Common myeloid progenitor, CD34-positive (primary cell): ENCODE measurements at regions of chr2 and their contacts with region 1.

Region 1: GRCh38 chr2:85888684-85889626 is at the start of gene ST3GAL5:
- DNase-seq: peak; percentile 87 to 95 (median 94)
- H3K4me3 ChIP-seq: peak within 1 kb of the TSS; percentile 53 to 88 (median 84)
- H3K27ac ChIP-seq: peak within 1 kb of the TSS in 1 of 2 experiments; percentile 79
- H3K4me1 ChIP-seq: peaks cover 23 to 71% (median 60%) of the 10 kb centered on the region in 4 experiments
- H3K27me3 ChIP-seq: peaks cover 0 to 1% (median 0%) of the 10 kb centered on the region in 5 experiments

Region 2: DNA sequence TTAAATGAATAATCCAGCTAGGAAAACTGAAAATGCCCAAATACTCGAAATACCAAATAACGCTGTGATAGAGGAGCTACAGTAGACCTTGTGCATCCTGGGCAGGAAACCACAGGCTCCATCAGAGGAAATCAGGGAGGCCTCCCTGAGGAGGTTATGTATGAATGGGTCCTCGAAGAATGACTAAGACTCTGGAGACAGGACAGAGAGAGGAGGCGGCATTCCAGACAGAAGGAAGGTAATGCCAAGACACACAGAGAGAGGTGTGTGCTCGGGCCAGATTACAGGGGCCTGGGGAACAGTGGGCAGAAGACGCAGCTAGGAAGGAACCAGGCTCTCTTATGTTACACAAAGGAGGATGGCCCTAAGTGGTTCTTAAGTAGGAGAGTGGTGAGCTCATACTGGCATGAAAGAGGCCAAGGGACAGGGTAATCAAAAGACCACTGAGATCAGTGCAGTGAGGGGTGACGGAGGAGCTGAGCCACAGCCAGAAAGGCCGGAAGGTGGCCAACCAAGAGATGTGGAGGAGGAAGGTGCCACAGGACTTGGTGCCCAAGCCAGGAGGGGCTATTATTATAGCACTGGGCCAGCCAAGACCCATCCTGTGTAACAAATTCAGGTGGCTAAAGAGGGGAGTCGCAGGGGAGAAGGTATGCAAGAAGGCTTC is 10.1 kb before region 1 on chr2:
- CTCF ChIA-PET with region 1: interaction called, 20 read pairs
- POLR2A ChIA-PET with region 1: interaction called, 5 read pairs
- DNase-seq: peak in 2 of 3 donors; percentile 51 to 58
- H3K4me3 ChIP-seq: peak overlapping the region in 1 of 7 experiments; percentile 7
- H3K27ac ChIP-seq: no peak overlapping the region
- H3K4me1 ChIP-seq: peaks cover 5 to 36% (median 27%) of the 10 kb centered on the region in 4 experiments
- H3K27me3 ChIP-seq: no peaks in the 10 kb centered on the region

Region 3: DNA sequence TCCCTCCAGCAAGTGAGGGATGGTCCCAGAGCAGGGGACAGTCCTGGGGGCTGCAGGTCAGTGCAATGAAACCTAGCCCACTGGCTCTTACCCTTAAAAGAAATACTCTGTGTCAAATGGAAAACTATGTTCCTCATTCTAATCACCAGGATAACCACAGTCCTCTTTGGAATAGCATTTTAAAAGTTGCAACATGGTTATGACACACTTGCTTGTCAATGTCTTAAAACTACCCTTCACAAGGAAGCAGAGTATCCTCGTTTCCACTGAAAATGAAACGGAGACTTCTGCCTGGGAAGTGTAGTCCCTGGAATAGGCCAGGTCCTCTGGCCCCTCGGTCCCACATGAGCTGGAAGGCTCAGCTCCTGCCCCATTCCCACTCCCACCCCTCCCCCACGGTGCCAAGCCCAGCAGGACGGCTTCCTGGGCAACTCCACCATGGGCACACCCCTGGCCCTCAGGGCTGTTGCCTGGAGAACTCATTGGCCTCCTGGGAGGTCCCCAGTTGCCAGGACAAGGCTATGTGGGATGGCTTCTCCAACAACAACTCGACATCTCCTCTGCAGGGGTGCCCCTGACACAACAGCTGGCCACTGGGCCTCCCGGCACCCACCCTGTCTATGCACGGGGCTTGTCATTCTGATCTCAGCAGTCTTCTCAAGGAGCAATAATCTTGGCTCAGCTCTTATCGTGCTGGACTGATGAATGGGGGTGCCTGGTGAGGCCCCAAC is 38.1 kb after region 1 on chr2:
- CTCF ChIA-PET with region 1: interaction called, 25 read pairs
- POLR2A ChIA-PET with region 1: interaction called, 3 read pairs
- DNase-seq: no peak
- H3K4me3 ChIP-seq: no peak overlapping the region
- H3K27ac ChIP-seq: no peak overlapping the region
- H3K4me1 ChIP-seq: peaks cover 0 to 4% (median 0%) of the 10 kb centered on the region in 4 experiments
- H3K27me3 ChIP-seq: no peaks in the 10 kb centered on the region

Region 4: GRCh38 chr2:86020984-86021383 is 132.0 kb after region 1 on chr2:
- CTCF ChIA-PET with region 1: interaction called, 10 read pairs
- POLR2A ChIA-PET with region 1: interaction called, 3 read pairs
- DNase-seq: no peak
- H3K4me3 ChIP-seq: no peak overlapping the region
- H3K27ac ChIP-seq: no peak overlapping the region
- H3K4me1 ChIP-seq: peaks cover 0 to 8% (median under 1%) of the 10 kb centered on the region in 4 experiments
- H3K27me3 ChIP-seq: no peaks in the 10 kb centered on the region

Region 5: DNA sequence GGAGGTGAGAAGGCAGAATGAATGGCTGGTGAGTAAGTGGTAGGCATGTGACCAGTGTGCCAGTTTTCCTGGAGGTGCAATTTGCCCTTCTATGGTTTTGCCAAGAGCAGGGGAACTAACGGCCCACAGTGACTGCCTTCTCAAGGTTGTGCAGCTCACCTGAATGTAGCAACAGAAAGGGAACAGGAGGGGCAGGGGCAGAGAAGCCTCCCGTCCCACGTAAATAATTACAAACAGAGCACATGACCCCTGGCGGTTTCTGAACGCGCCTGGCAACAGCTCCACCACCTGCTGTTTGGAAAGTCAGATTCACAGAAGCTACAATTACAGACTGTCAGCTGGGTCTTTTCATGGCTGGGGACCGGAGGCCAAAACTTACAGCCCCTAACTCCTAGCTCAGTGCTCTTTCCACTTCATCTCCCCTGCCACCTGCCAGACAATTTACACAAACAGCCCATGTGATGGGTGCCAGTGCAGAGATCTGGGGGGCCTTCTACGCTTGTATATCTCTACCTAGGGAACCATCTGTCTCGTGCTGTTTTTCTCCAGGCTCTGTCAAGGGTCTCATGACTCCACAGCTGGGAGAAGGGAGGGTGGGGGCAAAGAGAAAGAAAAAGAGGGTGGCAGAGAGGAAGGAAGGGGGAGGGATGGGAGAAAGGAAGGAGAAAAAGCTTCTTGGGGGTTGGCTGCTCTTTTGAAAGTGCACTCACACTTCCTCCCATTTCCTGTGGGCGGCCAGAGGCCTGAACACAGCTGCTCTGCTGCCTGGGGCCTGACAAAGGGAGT is 147.1 kb after region 1 on chr2:
- CTCF ChIA-PET with region 1: interaction called, 87 read pairs
- POLR2A ChIA-PET with region 1: interaction called, 4 read pairs
- DNase-seq: peak; percentile 70 to 90 (median 84)
- H3K4me3 ChIP-seq: peak overlapping the region in 4 of 7 experiments; percentile 25 to 50 (median 34)
- H3K27ac ChIP-seq: peak overlapping the region; percentile 40 to 82
- H3K4me1 ChIP-seq: peaks cover 17 to 62% (median 52%) of the 10 kb centered on the region in 4 experiments
- H3K27me3 ChIP-seq: no peaks in the 10 kb centered on the region